Colonic mucosa (tissue), 4 donors: ENCODE measurements at regions of chr5 and their contacts with region 1.

Region 1: GRCh38 chr5:112757468-112758208 is 20.0 kb downstream of the APC start:
- DNase-seq: no peak
- H3K4me3 ChIP-seq: no peak overlapping the region
- H3K27ac ChIP-seq: no peak overlapping the region
- H3K4me1 ChIP-seq: no peaks in the 10 kb centered on the region
- H3K27me3 ChIP-seq: no peaks in the 10 kb centered on the region
- CTCF ChIP-seq: peak; percentile 82

Region 2: DNA sequence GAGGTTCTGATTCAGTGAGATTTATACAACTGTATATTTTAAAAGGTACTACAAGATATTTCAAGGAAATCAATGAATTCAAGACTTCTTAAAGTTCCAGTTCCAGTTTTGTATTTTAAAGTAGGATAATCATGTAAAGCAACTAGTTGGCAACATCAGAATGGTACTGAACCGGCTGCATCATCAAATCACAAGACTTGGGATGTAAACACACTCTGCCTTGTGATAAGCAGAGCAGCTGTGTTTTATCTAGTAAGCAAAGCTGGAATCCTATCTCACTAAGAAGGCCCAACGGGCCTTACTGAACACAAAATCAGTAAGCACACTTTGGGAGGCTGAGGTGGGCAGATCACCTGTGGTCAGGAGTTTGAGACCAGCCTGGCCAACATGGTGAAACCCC is 673.5 kb before region 1 on chr5:
- intact Hi-C with region 1: no loop called
- DNase-seq: no peak
- H3K4me3 ChIP-seq: no peak overlapping the region
- H3K27ac ChIP-seq: no peak overlapping the region
- H3K4me1 ChIP-seq: no peaks in the 10 kb centered on the region
- H3K27me3 ChIP-seq: no peaks in the 10 kb centered on the region
- CTCF ChIP-seq: no peak

Region 3: DNA sequence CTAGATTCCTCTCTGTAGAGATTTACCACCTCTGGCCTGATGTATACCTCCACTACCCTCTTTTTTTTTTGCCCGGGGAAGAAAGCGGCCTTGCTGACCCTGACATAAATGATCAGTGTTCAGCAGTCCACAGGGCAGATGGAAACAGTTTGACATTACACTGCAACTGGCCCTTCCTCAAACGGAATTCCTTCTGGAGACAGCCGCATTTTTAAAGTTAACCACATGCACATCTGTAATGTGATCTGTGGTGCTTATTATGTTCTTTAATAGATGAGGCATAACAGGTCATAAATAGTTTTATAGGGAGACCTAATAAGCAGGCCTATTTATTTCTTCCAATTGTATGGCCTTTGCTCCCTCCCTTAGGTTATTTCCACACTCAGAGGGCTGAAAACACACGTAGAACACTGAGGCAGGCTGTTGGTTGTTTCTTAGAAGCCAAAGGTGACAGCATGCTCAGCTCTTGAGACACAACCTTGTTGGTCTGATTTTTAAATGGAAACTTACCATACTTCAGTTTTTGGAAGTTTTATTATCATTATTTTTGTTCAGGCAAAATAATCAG is 103.9 kb before region 1 on chr5:
- intact Hi-C with region 1: no loop called
- DNase-seq: no peak
- H3K4me3 ChIP-seq: no peak overlapping the region
- H3K27ac ChIP-seq: no peak overlapping the region
- H3K4me1 ChIP-seq: no peaks in the 10 kb centered on the region
- H3K27me3 ChIP-seq: no peaks in the 10 kb centered on the region
- CTCF ChIP-seq: no peak

Region 4: GRCh38 chr5:112691758-112692157 is 65.9 kb before region 1 on chr5:
- intact Hi-C with region 1: loop called (anchors 5 kb)
- DNase-seq: peak; percentile 44
- H3K4me3 ChIP-seq: no peak overlapping the region
- H3K27ac ChIP-seq: no peak overlapping the region
- H3K4me1 ChIP-seq: no peaks in the 10 kb centered on the region
- H3K27me3 ChIP-seq: no peaks in the 10 kb centered on the region
- CTCF ChIP-seq: peak; percentile 19